A549 (cell line): ENCODE measurements at regions of chr20 and their contacts with region 1.

Region 1: DNA sequence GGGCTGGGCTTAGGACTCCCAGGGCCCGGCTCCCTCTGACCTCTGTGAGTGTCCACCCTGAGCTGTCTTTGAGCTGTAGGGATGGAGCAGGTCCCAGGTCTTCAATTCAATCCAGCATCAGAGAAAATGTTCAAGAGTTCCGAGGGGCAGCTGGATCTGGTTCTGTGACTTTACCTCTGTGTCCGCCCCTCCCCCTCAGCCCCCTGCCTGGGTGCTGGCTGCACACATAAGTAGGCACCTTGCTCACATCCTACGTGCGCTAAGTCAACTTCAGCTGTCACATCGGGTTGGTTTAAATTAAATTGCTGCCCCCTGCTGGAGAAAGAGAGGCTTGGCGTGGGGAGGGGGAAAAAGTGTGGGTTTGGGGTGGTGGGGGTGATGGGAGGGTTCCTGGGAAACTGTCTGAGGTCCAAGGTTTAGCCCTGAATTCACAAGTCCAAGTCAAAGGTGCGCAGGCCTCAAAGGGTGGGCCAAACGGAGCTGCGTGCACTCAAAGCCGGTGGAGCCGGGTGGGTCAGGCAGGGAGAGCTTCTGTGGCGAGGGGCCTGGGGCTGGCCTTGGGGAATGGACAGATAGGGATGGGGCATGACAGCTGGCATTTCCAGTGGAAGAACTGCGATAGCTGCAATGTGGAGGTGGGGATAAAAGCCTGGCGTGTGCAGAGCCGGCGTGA is 3.0 kb downstream of the WFDC5 start:
- DNase-seq: peak in 1 of 2 experiments; percentile 20
- ATAC-seq: peak in 1 of 2 experiments; percentile 59; a peak in 3 of 6 replicates
- H3K4me3 ChIP-seq: no peak overlapping the region
- H3K27ac ChIP-seq: no peak overlapping the region
- H3K4me1 ChIP-seq: no peaks in the 10 kb centered on the region
- CTCF ChIP-seq: peak; percentile 60
- EP300 ChIP-seq: no peak
- POLR2A ChIP-seq: no peak
- RAD21 ChIP-seq: peak; percentile 44 to 45; a peak in 4 of 5 replicates

Region 2: GRCh38 chr20:45011108-45011526 is 100.8 kb before region 1 on chr20:
- CTCF ChIA-PET with region 1: interaction called, 27 read pairs
- POLR2A ChIA-PET with region 1: no interaction called
- DNase-seq: peak; percentile 46 to 47
- ATAC-seq: peak; percentile 90 to 91
- H3K4me3 ChIP-seq: no peak overlapping the region
- H3K27ac ChIP-seq: no peak overlapping the region
- H3K4me1 ChIP-seq: peaks cover 12% of the 10 kb centered on the region
- CTCF ChIP-seq: peak; percentile 92
- EP300 ChIP-seq: no peak
- POLR2A ChIP-seq: no peak
- RAD21 ChIP-seq: peak; percentile 74 to 82

Region 3: DNA sequence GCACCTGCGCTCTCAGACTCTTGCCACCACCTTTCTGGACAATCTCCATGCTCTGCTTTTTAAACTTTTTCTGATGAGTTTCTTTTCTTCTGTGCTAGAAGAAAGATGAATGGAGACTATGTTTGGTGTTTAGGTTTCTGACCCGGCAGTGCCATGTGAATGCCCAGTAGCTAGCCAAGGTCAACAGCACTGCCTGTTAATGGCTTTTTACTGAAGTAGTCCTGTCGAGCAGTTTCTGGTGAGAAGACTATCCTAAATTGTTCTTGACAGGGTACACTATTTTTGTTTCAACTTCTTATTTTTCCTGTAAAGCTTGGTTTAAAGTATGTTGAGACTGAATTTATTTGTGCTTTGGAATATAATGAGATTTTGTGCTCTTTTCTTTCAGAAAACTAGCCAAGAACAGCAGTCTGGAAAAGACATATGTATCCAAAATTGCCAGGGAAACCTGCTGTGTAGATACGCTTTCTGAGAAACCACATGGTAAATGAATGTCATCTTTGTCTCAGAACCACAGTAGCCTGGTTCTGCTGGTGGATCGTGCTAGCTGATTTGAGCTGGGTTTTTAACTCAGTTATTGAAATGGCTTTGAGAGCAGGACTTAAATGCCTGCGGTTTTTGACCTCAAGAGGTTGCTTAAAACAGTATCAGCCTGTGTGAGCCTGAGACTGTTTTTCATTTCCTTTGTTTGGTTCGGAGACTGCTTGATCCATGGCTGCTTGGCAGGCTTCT is 59.1 kb before region 1 on chr20:
- CTCF ChIA-PET with region 1: interaction called, 12 read pairs
- POLR2A ChIA-PET with region 1: no interaction called
- DNase-seq: no peak
- ATAC-seq: no peak
- H3K4me3 ChIP-seq: no peak overlapping the region
- H3K27ac ChIP-seq: no peak overlapping the region
- H3K4me1 ChIP-seq: 0 out of 3 replicates have a peak, but pooled peaks cover 5% of the 10 kb centered on the region
- CTCF ChIP-seq: no peak
- EP300 ChIP-seq: no peak
- POLR2A ChIP-seq: no peak
- RAD21 ChIP-seq: no peak

Region 4: DNA sequence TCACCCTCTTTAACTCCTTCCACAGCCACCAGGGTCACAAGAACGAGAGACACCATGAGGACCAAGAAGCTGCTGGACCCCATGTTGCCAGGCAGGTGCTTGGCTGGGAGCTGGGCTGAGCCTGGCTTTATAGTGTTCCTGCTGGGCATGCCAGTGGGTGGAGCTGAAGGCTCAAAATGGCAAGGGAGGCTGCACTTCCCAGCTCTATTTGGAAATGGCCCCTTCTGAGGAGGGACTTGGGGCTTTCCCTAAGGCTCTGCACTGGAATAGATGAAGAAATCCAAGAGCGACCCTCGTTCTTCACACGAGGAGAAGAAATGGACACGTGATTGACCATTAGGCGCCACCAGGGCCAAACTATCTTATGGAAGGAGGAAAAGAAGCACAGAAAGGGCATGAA is 12.4 kb after region 1 on chr20 and contains the start of gene WFDC12:
- CTCF ChIA-PET with region 1: interaction called, 21 read pairs
- POLR2A ChIA-PET with region 1: no interaction called
- DNase-seq: no peak
- ATAC-seq: no peak
- H3K4me3 ChIP-seq: no peak within 1 kb of the TSS
- H3K27ac ChIP-seq: no peak within 1 kb of the TSS
- H3K4me1 ChIP-seq: no peaks in the 10 kb centered on the region
- CTCF ChIP-seq: no peak
- EP300 ChIP-seq: no peak
- POLR2A ChIP-seq: no peak
- RAD21 ChIP-seq: no peak
- polyA plus RNA-seq, gene WFDC12: not detected in 2 replicates